ENCODE measurements at regions of chr2 and their contacts with region 1.

Region 1: GRCh38 chr2:191051825-191052778 is 38.1 kb upstream of the STAT1 start:
- DNase-seq: peak; percentile 71
- H3K4me3 ChIP-seq: no peak overlapping the region
- H3K27ac ChIP-seq: no peak overlapping the region
- H3K4me1 ChIP-seq: peaks cover 14% of the 10 kb centered on the region
- H3K27me3 ChIP-seq: no peaks in the 10 kb centered on the region
- CTCF ChIP-seq: peak; percentile 74

Region 2: DNA sequence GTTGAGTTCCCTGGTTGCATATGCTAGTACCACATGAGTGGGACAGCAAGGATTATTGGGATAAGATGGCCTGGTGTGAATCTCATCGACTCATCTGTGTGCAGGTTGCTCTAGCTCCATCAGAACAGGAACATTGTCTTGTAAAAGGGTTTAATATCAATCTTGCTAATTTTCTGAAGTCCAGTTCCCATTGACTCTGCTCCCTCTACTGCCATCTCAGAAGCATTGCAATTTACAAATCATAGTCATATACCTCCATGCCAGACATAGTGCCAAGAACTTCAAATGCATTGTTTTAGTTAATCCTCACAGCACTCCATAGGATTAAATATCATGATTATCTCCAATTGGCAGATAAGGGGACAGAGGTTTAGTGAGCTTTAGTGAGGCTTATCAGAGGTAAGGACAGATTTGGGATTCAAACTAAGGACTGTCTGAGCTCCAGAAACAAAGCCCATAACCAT is 103.5 kb after region 1 on chr2:
- CTCF ChIA-PET with region 1: interaction called, 45 read pairs
- POLR2A ChIA-PET with region 1: no interaction called
- intact Hi-C with region 1: loop called (anchors 1 kb)
- DNase-seq: peak; percentile 60
- H3K4me3 ChIP-seq: no peak overlapping the region
- H3K27ac ChIP-seq: no peak overlapping the region
- H3K4me1 ChIP-seq: peaks cover 15% of the 10 kb centered on the region
- H3K27me3 ChIP-seq: no peaks in the 10 kb centered on the region
- CTCF ChIP-seq: peak; percentile 73

Region 3: GRCh38 chr2:191521608-191522208 is 469.6 kb after region 1 on chr2:
- CTCF ChIA-PET with region 1: interaction called, 11 read pairs
- POLR2A ChIA-PET with region 1: no interaction called
- intact Hi-C with region 1: loop called (anchors 5 kb)
- DNase-seq: peak; percentile 45
- H3K4me3 ChIP-seq: no peak overlapping the region
- H3K27ac ChIP-seq: no peak overlapping the region
- H3K4me1 ChIP-seq: no peaks in the 10 kb centered on the region
- H3K27me3 ChIP-seq: no peaks in the 10 kb centered on the region
- CTCF ChIP-seq: peak; percentile 74

Region 4: DNA sequence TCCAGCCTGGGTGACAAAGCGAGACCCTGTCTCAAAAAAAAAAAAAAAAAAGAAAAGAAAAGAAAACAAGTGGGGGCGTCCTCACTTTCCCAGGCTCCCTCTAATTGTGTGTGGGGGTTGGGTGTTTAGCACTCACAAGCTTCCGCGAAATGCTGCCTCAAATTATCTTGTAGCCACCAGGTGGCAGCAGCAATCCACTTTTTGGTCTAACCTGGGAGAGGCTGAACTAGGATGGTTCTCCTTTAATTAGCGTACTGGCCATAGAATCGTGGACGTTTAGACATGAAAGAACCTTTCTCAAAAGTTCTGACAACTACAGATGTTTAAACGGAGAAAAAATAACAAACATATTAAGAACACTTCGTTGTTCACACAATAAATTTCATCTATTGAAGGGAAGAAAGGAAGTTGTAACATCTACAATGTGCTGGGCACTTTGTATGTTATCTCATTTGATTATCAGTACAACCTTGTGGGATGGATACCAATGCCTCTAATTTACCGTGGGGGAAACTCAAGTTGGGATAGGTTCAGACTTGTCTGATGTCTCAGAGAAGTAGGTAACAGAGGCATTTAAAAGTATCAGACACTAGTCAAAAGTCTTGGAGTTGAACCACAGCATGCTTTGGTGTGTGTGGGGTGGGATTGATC is 503.1 kb after region 1 on chr2:
- CTCF ChIA-PET with region 1: interaction called, 12 read pairs
- POLR2A ChIA-PET with region 1: no interaction called
- intact Hi-C with region 1: no loop called
- DNase-seq: peak; percentile 90
- H3K4me3 ChIP-seq: no peak overlapping the region
- H3K27ac ChIP-seq: no peak overlapping the region
- H3K4me1 ChIP-seq: peaks cover 4% of the 10 kb centered on the region
- H3K27me3 ChIP-seq: no peaks in the 10 kb centered on the region
- CTCF ChIP-seq: peak; percentile 74